K562 (cell line): ENCODE measurements at regions of chr12 and their contacts with region 1.

Region 1: DNA sequence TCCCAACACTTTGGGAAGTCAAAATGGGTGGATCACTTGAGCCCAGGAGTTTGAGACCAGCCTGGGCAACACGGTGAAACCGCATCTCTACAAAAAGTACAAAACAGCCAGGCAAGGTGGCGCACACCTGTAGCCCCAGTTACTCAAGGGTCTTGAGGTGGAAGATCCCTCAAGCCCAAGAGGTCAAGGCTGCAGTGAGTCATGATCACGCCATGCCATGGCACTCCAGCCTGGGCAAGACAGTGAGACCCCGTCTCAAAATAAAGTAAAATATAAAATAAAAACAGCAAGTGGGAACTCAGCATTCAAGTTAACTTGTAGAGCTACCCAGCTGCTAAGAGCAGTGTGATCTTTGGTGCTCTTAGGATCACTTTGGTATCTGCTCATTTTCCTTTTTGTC is 12.7 kb downstream of the RFC5 start:
- DNase-seq: no peak
- ATAC-seq: no peak; the same call in 2 of the 3 replicates
- H3K4me3 ChIP-seq: no peak overlapping the region
- H3K27ac ChIP-seq: no peak overlapping the region
- H3K4me1 ChIP-seq: no peaks in the 10 kb centered on the region; a peak in 1 of 5 replicates
- H3K27me3 ChIP-seq: no peaks in the 10 kb centered on the region
- CTCF ChIP-seq: no peak
- EP300 ChIP-seq: no peak
- POLR2A ChIP-seq: no peak
- RAD21 ChIP-seq: no peak

Region 2: GRCh38 chr12:118016424-118017264 is 12.5 kb before region 1 on chr12 and contains the start of gene RFC5:
- CTCF ChIA-PET with region 1: no interaction called
- POLR2A ChIA-PET with region 1: interaction called, 16 read pairs
- in situ Hi-C with region 1: no loop called
- intact Hi-C with region 1: no loop called
- DNase-seq: peak; percentile 98 to 99 (median 99)
- ATAC-seq: peak; percentile 96
- H3K4me3 ChIP-seq: peak within 1 kb of the TSS; percentile 57
- H3K27ac ChIP-seq: peak within 1 kb of the TSS; percentile 87
- H3K4me1 ChIP-seq: peaks cover 16 to 25% of the 10 kb centered on the region in 2 experiments
- H3K27me3 ChIP-seq: no peaks in the 10 kb centered on the region
- CTCF ChIP-seq: peak in 1 of 3 experiments; percentile 27; a peak in 1 of 6 replicates
- EP300 ChIP-seq: no peak
- POLR2A ChIP-seq: peak; percentile 95
- RAD21 ChIP-seq: no peak
- polyA plus RNA-seq, gene RFC5: 180 to 189 TPM

Region 3: DNA sequence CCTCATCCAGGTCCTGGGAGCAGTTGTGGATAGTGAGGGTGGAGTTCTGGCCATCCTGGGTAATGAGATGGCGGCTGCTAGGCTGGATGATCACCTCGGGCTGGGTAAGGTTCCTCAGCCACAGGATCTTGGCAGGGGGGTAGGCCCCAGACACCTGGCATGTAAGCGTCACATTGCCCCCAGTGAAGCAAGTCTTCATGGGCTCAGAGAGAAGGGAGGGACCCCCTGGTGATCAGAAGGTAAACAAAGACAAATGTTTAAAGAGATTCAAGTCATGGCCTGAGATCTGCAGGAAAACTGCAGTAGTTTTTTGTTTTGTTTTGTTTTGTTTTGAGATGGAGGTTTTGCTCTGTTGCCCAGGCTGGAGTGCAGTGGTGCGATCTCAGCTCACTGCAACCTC is 44.6 kb after region 1 on chr12:
- CTCF ChIA-PET with region 1: no interaction called
- POLR2A ChIA-PET with region 1: no interaction called
- in situ Hi-C with region 1: no loop called
- intact Hi-C with region 1: no loop called
- DNase-seq: no peak
- ATAC-seq: no peak
- H3K4me3 ChIP-seq: no peak overlapping the region
- H3K27ac ChIP-seq: no peak overlapping the region
- H3K4me1 ChIP-seq: no peaks in the 10 kb centered on the region
- H3K27me3 ChIP-seq: peaks cover 5 to 19% of the 10 kb centered on the region in 2 experiments
- CTCF ChIP-seq: no peak
- EP300 ChIP-seq: no peak
- POLR2A ChIP-seq: no peak
- RAD21 ChIP-seq: no peak